ENCODE measurements at regions of chr17 and their contacts with region 1.

Region 1: GRCh38 chr17:9291912-9292560 is 270.7 kb downstream of the NTN1 start:
- DNase-seq: peak; percentile 70
- H3K4me3 Mint-ChIP-seq: no peak overlapping the region
- H3K27ac Mint-ChIP-seq: no peak overlapping the region
- H3K4me1 Mint-ChIP-seq: peaks cover 35% of the 10 kb centered on the region
- H3K27me3 Mint-ChIP-seq: no peaks in the 10 kb centered on the region

Region 2: DNA sequence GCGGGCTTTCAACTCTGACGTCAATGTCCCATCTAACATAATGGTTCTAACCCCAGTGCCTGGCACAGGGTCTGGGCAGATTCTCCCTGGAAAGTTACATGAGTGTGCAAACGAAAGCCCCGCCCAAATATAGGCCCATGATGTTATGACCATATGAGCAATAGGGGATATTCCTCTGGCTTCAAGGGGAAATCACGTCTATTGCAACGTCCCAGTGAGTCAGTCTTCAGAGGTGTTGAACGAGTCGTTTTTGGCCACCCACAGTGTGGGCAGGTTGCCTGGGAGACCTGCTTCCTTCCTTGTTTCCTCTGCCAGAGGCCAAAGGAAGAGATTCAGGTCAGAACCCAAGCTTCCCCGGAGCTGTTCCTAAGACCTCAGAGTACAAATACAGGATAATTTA is 356.8 kb before region 1 on chr17:
- CTCF ChIA-PET with region 1: no interaction called
- intact Hi-C with region 1: loop called (anchors 1 kb)
- DNase-seq: peak; percentile 91
- H3K4me3 Mint-ChIP-seq: peak overlapping the region; percentile 35
- H3K27ac Mint-ChIP-seq: peak overlapping the region; percentile 82
- H3K4me1 Mint-ChIP-seq: peaks cover 61% of the 10 kb centered on the region
- H3K27me3 Mint-ChIP-seq: no peaks in the 10 kb centered on the region

Region 3: GRCh38 chr17:9021992-9022572 is 270.0 kb before region 1 on chr17:
- CTCF ChIA-PET with region 1: no interaction called
- intact Hi-C with region 1: loop called (anchors 1 kb)
- DNase-seq: no peak
- H3K4me3 Mint-ChIP-seq: peak overlapping the region; percentile 81
- H3K27ac Mint-ChIP-seq: no peak overlapping the region
- H3K4me1 Mint-ChIP-seq: peaks cover 6% of the 10 kb centered on the region
- H3K27me3 Mint-ChIP-seq: peaks cover 54% of the 10 kb centered on the region

Region 4: GRCh38 chr17:9148905-9149525 is 143.0 kb before region 1 on chr17:
- CTCF ChIA-PET with region 1: no interaction called
- intact Hi-C with region 1: no loop called
- DNase-seq: no peak
- H3K4me3 Mint-ChIP-seq: no peak overlapping the region
- H3K27ac Mint-ChIP-seq: no peak overlapping the region
- H3K4me1 Mint-ChIP-seq: no peaks in the 10 kb centered on the region
- H3K27me3 Mint-ChIP-seq: peaks cover 2% of the 10 kb centered on the region

Region 5: DNA sequence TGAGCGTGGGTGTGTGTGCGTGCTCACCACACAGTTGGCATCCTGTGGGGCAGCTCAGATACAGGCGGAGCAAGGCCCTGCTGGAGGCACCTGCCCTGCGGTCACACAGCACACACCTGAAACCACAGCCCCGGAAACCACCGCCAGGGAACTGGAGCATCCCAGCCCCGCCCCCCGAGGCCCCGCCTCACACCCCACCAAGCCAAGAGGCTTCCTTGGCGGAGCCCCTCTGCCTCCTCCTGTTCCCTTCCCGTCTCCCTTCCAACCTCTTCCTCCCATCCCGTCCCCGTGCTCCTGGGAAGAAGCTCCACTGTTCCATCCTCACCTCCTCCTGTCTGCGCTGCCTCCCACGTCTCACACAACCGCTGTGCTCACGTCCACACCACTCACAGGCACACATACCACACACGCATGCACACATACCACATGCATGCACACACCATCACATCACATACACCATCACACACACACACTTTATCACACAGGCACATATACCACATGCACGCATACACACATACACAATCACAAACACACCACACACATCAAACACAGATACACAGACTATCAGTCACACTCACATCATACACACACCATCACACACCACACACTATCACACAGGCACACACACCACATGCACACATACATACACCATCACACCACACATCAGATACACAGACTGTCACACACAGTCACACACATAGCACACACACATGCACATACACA is 65.1 kb before region 1 on chr17:
- CTCF ChIA-PET with region 1: interaction called, 3 read pairs
- intact Hi-C with region 1: loop called (anchors 1 kb)
- DNase-seq: peak; percentile 80
- H3K4me3 Mint-ChIP-seq: no peak overlapping the region
- H3K27ac Mint-ChIP-seq: no peak overlapping the region
- H3K4me1 Mint-ChIP-seq: peaks cover 5% of the 10 kb centered on the region
- H3K27me3 Mint-ChIP-seq: no peaks in the 10 kb centered on the region

Region 6: GRCh38 chr17:9256751-9257629 is 35.0 kb before region 1 on chr17:
- CTCF ChIA-PET with region 1: interaction called, 14 read pairs
- intact Hi-C with region 1: loop called (anchors 1 kb)
- DNase-seq: no peak
- H3K4me3 Mint-ChIP-seq: no peak overlapping the region
- H3K27ac Mint-ChIP-seq: no peak overlapping the region
- H3K4me1 Mint-ChIP-seq: peaks cover 20% of the 10 kb centered on the region
- H3K27me3 Mint-ChIP-seq: no peaks in the 10 kb centered on the region

Region 7: GRCh38 chr17:9470171-9470570 is 178.1 kb after region 1 on chr17:
- CTCF ChIA-PET with region 1: no interaction called
- intact Hi-C with region 1: loop called (anchors 1 kb)
- DNase-seq: no peak
- H3K4me3 Mint-ChIP-seq: no peak overlapping the region
- H3K27ac Mint-ChIP-seq: peak overlapping the region; percentile 55
- H3K4me1 Mint-ChIP-seq: peaks cover 25% of the 10 kb centered on the region
- H3K27me3 Mint-ChIP-seq: no peaks in the 10 kb centered on the region

Region 8: GRCh38 chr17:9566067-9566466 is 274.0 kb after region 1 on chr17:
- CTCF ChIA-PET with region 1: no interaction called
- intact Hi-C with region 1: loop called (anchors 10 kb)
- DNase-seq: no peak
- H3K4me3 Mint-ChIP-seq: peak overlapping the region; percentile 5
- H3K27ac Mint-ChIP-seq: no peak overlapping the region
- H3K4me1 Mint-ChIP-seq: peaks cover 36% of the 10 kb centered on the region
- H3K27me3 Mint-ChIP-seq: no peaks in the 10 kb centered on the region

Measured in activated naive CD4-positive, alpha-beta T cell treated with anti-CD3 and anti-CD28 coated beads for 36 hours (primary cell).